T-cell (primary cell): ENCODE measurements at regions of chr19 and their contacts with region 1.

Region 1: GRCh38 chr19:38402967-38403861 is at the start of gene FAM98C:
- DNase-seq: peak; percentile 91 to 99 (median 97)
- ATAC-seq: peak; percentile 95 to 97 (median 96)
- H3K4me3 ChIP-seq: peak within 1 kb of the TSS; percentile 67 to 79
- H3K4me3 Mint-ChIP-seq: peak within 1 kb of the TSS; percentile 79 to 91 (median 89)
- H3K27ac ChIP-seq: peak within 1 kb of the TSS; percentile 86
- H3K27ac Mint-ChIP-seq: peak within 1 kb of the TSS; percentile 90 to 92
- H3K4me1 ChIP-seq: peaks cover 0 to 26% of the 10 kb centered on the region in 2 experiments
- H3K4me1 Mint-ChIP-seq: peaks cover 18 to 23% (median 19%) of the 10 kb centered on the region in 3 donors
- H3K27me3 ChIP-seq: peaks cover 0 to 10% of the 10 kb centered on the region in 2 experiments
- H3K27me3 Mint-ChIP-seq: peaks cover 0 to 2% of the 10 kb centered on the region in 2 donors
- total RNA-seq, gene FAM98C: 31.9 to 62.1 (median 57.4) TPM

Region 2: DNA sequence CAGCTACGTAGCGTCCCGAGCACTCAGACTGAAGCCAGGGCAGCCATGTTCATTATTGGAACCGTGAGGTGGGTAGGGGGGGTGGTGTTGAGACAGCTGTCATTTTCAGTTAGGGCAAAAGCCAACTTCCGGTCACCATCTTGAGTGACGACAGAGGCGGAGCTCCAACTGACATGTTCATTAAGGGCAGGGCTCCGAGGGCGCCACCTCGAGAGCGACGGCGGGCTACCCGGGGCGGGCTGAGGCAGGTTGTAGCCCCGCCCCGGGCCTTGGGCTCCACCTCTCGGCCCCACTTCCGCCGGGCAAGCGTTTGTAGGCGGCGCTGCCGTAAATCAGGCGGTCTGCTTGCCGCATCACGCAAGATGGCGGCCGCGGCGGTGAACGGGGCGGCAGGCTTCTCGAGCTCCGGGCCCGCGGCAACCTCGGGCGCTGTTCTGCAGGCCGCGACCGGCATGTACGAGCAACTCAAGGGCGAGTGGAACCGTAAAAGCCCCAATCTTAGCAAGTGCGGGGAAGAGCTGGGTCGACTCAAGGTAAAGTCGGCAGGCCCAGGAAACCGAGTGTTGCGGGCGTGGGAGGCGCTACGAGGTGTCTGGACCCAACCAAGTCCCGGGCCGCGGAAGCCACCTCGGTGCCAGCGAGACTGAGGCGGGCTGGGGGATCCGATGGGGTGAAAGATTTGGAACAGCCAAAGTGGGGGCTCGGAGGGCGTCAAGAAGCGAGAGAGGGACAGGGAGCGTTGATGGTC is 28.6 kb before region 1 on chr19 and contains the start of gene PSMD8:
- CTCF ChIA-PET with region 1: interaction called in 1 of 2 experiments, 54 read pairs
- POLR2A ChIA-PET with region 1: no interaction called
- DNase-seq: peak; percentile 94 to 100 (median 99)
- ATAC-seq: peak; percentile 95 to 97 (median 97)
- H3K4me3 ChIP-seq: peak within 1 kb of the TSS; percentile 74 to 92
- H3K4me3 Mint-ChIP-seq: peak within 1 kb of the TSS; percentile 98 to 100 (median 99)
- H3K27ac ChIP-seq: peak within 1 kb of the TSS; percentile 79
- H3K27ac Mint-ChIP-seq: peak within 1 kb of the TSS; percentile 97 to 98
- H3K4me1 ChIP-seq: peaks cover 15 to 37% of the 10 kb centered on the region in 2 experiments
- H3K4me1 Mint-ChIP-seq: peaks cover 30 to 35% (median 31%) of the 10 kb centered on the region in 3 donors
- H3K27me3 ChIP-seq: peaks cover 0 to 13% of the 10 kb centered on the region in 2 experiments
- H3K27me3 Mint-ChIP-seq: peaks cover 0 to 11% of the 10 kb centered on the region in 2 donors
- total RNA-seq, gene PSMD8: 76.4 to 95.2 (median 85.8) TPM

Region 3: GRCh38 chr19:38387550-38388348 is 15.5 kb before region 1 on chr19 and contains the start of gene GGN:
- CTCF ChIA-PET with region 1: interaction called, 21 to 31 read pairs
- POLR2A ChIA-PET with region 1: interaction called in 1 of 2 experiments, 12 read pairs
- DNase-seq: peak; percentile 57 to 83 (median 73)
- ATAC-seq: peak; percentile 74 to 79 (median 76)
- H3K4me3 ChIP-seq: peak within 1 kb of the TSS; percentile 40 to 54
- H3K4me3 Mint-ChIP-seq: peak within 1 kb of the TSS; percentile 83 to 91 (median 89)
- H3K27ac ChIP-seq: no peak within 1 kb of the TSS
- H3K27ac Mint-ChIP-seq: peak within 1 kb of the TSS; percentile 62 to 76
- H3K4me1 ChIP-seq: peaks cover 2 to 43% of the 10 kb centered on the region in 2 experiments
- H3K4me1 Mint-ChIP-seq: peaks cover 13 to 31% (median 30%) of the 10 kb centered on the region in 3 donors
- H3K27me3 ChIP-seq: peaks cover 0 to 53% of the 10 kb centered on the region in 2 experiments
- H3K27me3 Mint-ChIP-seq: peaks cover 9 to 13% of the 10 kb centered on the region in 2 donors
- total RNA-seq, gene GGN: 0.18 to 0.60 (median 0.31) TPM in 4 of 5 donors, not detected in the other

Region 4: GRCh38 chr19:38618590-38619360 is 215.6 kb after region 1 on chr19 and contains the start of gene EIF3K:
- CTCF ChIA-PET with region 1: interaction called in 1 of 2 experiments, 21 read pairs
- POLR2A ChIA-PET with region 1: no interaction called
- DNase-seq: peak; percentile 92 to 99 (median 95)
- ATAC-seq: peak; percentile 68 to 82 (median 74)
- H3K4me3 ChIP-seq: peak within 1 kb of the TSS; percentile 95 to 96
- H3K4me3 Mint-ChIP-seq: peak within 1 kb of the TSS; percentile 96 to 98 (median 98)
- H3K27ac ChIP-seq: peak within 1 kb of the TSS; percentile 83
- H3K27ac Mint-ChIP-seq: peak within 1 kb of the TSS; percentile 98
- H3K4me1 ChIP-seq: peaks cover 11 to 62% of the 10 kb centered on the region in 2 experiments
- H3K4me1 Mint-ChIP-seq: peaks cover 50 to 56% (median 52%) of the 10 kb centered on the region in 3 donors
- H3K27me3 ChIP-seq: no peaks in the 10 kb centered on the region
- H3K27me3 Mint-ChIP-seq: no peaks in the 10 kb centered on the region
- total RNA-seq, gene EIF3K: 317 to 352 (median 319) TPM

Region 5: DNA sequence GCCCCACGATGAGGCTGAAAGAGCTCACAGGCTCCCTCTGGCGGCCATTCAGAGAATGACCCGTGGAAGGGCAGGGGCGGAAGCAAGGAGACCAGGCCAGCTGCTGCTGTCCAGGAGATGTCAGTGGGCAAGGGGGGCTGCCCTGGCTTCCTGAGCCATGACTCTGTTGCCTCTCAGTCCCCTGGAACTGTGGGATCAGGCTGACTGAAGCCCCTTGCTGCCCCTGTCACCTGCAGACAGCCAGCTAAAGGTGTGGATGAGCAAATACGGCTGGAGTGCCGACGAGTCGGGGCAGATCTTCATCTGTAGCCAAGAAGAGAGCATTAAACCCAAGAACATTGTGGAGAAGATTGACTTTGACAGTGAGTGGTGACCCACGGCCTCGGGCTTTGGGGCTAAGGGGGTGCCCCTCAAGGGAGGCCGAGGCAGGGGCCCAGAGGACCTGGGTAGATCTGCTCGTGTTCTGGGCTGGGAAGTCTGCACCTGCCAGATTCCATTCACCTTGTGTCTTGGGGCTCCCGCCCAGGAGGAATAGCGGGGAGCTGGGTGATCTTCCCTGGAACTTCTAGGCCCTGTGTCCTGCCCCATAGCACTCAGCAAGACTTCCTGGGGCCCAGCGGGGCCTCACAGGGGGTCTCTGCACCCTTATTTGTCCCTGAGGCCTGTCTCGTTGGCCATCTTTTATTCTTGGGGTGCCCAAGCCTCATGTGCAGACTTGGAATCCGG is 231.7 kb after region 1 on chr19:
- CTCF ChIA-PET with region 1: interaction called in 1 of 2 experiments, 27 read pairs
- POLR2A ChIA-PET with region 1: interaction called in 1 of 2 experiments, 3 read pairs
- DNase-seq: peak in 34 of 35 experiments; percentile 35 to 84 (median 64)
- ATAC-seq: peak in 1 of 4 experiments; percentile 36
- H3K4me3 ChIP-seq: no peak overlapping the region
- H3K4me3 Mint-ChIP-seq: peak overlapping the region in 2 of 3 donors; percentile 6 to 39
- H3K27ac ChIP-seq: peak overlapping the region; percentile 37
- H3K27ac Mint-ChIP-seq: peak overlapping the region; percentile 87 to 91
- H3K4me1 ChIP-seq: peaks cover 17 to 33% of the 10 kb centered on the region in 2 experiments
- H3K4me1 Mint-ChIP-seq: peaks cover 26 to 35% (median 31%) of the 10 kb centered on the region in 3 donors
- H3K27me3 ChIP-seq: no peaks in the 10 kb centered on the region
- H3K27me3 Mint-ChIP-seq: no peaks in the 10 kb centered on the region

Region 6: GRCh38 chr19:38647368-38647965 is 244.3 kb after region 1 on chr19 and contains the start of gene ACTN4:
- CTCF ChIA-PET with region 1: interaction called, 7 to 11 read pairs
- POLR2A ChIA-PET with region 1: no interaction called
- DNase-seq: peak; percentile 97 to 100 (median 100)
- ATAC-seq: peak; percentile 92 to 96 (median 92)
- H3K4me3 ChIP-seq: peak within 1 kb of the TSS; percentile 87 to 90
- H3K4me3 Mint-ChIP-seq: peak within 1 kb of the TSS; percentile 88 to 98 (median 91)
- H3K27ac ChIP-seq: peak within 1 kb of the TSS; percentile 57
- H3K27ac Mint-ChIP-seq: peak within 1 kb of the TSS; percentile 81 to 85
- H3K4me1 ChIP-seq: peaks cover 21 to 45% of the 10 kb centered on the region in 2 experiments
- H3K4me1 Mint-ChIP-seq: peaks cover 34 to 47% (median 39%) of the 10 kb centered on the region in 3 donors
- H3K27me3 ChIP-seq: peaks cover 0 to 26% of the 10 kb centered on the region in 2 experiments
- H3K27me3 Mint-ChIP-seq: peaks cover 9 to 25% of the 10 kb centered on the region in 2 donors
- total RNA-seq, gene ACTN4: 100.0 to 201 (median 175) TPM

Region 7: DNA sequence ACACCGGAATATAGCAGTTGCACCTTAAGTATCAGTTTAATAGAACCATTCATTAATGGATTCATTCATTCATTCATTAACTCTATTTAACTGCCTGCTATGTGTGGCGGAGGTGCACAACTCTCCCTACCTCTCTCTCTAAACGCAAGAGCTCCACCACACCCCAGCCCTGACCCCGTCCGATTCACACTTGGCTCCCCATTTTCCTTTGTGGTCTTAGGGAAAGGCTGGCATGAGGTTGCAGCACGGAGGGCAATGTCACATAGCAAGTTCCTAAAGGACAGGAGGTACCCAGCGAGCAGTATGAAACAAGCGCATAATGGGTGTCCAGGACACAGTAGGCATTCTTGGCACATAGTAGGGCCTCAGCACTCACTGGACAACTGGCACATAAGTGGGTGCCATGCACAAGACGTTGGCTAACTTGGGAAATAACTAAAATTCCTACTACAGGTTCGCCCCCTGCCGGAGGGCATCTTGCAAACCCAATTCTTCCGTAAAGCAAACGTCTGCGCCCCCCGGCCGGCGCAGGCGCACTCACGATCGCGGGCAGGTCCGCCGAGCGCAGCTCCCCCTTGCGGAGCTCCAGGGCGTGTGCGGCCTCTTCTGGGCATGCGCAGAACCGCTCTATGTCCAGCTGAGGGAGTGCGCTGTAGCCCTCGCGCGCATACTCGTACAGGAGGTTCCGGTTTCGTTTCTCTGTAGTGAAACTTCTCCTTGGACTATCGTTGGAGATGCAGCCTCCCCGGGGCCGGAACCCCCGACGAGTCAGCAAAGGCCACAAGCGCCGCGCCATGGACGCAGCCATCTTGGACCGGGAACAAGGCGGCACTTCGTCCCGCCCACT is 526.9 kb after region 1 on chr19 and contains the start of gene SARS2:
- CTCF ChIA-PET with region 1: interaction called in 1 of 2 experiments, 33 read pairs
- POLR2A ChIA-PET with region 1: no interaction called
- DNase-seq: peak in 32 of 35 experiments; percentile 84 to 98 (median 90)
- ATAC-seq: peak; percentile 63 to 77 (median 70)
- H3K4me3 ChIP-seq: peak within 1 kb of the TSS; percentile 86 to 89
- H3K4me3 Mint-ChIP-seq: peak within 1 kb of the TSS; percentile 97 to 99 (median 97)
- H3K27ac ChIP-seq: peak within 1 kb of the TSS; percentile 86
- H3K27ac Mint-ChIP-seq: peak within 1 kb of the TSS; percentile 96 to 99
- H3K4me1 ChIP-seq: peaks cover 10 to 74% of the 10 kb centered on the region in 2 experiments
- H3K4me1 Mint-ChIP-seq: peaks cover 34 to 53% (median 39%) of the 10 kb centered on the region in 3 donors
- H3K27me3 ChIP-seq: no peaks in the 10 kb centered on the region
- H3K27me3 Mint-ChIP-seq: no peaks in the 10 kb centered on the region
- total RNA-seq, gene SARS2: 22.0 to 33.5 (median 26.0) TPM